Activated naive CD4-positive, alpha-beta T cell treated with anti-CD3 and anti-CD28 coated beads for 36 hours (primary cell): ENCODE measurements at regions of chr18 and their contacts with region 1.

Region 1: DNA sequence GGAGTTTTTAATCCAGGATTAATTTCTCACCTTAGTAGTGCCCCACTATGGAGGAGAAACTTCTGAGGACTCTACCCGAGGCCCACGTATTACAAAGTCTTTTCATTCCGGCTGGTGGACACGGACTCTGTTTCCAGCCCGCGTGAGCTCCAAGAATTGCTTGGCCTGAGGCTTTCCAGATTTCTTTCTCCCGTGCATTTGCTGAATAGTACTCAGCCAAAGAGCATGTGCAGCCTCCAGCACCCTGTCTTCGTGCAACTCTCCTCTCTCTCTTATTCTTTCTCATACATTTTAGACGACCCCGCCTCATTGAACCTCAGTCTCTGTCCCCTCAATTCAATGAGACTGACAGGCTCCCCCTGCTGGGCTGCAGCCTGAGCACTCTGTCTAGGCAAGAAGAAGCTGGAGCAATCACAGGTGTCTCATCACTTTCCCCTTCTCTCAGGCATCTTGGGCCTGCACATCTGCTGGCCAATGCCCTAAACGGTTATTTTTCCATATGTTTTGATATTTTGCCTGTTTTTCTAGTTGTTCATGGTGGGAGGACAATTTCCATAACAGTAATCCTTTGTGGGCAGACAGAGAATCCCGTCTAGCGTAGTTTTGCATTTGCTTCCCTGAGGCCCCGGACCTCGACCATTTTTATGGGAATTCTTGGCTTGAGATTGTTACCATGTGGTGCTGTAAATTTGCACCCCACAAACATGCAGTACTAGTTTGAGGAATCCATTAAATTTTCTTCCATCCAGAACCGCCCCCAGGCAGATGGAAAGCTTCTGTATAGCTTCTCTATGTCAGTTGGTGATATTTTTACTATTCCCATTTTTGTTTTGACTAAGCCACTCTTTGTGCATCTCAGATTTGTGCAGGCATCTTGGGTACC is 50.1 kb upstream of the LPIN2 start:
- DNase-seq: peak; percentile 89
- H3K4me3 Mint-ChIP-seq: peak overlapping the region; percentile 4
- H3K27ac Mint-ChIP-seq: no peak overlapping the region
- H3K4me1 Mint-ChIP-seq: peaks cover 64% of the 10 kb centered on the region
- H3K27me3 Mint-ChIP-seq: no peaks in the 10 kb centered on the region

Region 2: DNA sequence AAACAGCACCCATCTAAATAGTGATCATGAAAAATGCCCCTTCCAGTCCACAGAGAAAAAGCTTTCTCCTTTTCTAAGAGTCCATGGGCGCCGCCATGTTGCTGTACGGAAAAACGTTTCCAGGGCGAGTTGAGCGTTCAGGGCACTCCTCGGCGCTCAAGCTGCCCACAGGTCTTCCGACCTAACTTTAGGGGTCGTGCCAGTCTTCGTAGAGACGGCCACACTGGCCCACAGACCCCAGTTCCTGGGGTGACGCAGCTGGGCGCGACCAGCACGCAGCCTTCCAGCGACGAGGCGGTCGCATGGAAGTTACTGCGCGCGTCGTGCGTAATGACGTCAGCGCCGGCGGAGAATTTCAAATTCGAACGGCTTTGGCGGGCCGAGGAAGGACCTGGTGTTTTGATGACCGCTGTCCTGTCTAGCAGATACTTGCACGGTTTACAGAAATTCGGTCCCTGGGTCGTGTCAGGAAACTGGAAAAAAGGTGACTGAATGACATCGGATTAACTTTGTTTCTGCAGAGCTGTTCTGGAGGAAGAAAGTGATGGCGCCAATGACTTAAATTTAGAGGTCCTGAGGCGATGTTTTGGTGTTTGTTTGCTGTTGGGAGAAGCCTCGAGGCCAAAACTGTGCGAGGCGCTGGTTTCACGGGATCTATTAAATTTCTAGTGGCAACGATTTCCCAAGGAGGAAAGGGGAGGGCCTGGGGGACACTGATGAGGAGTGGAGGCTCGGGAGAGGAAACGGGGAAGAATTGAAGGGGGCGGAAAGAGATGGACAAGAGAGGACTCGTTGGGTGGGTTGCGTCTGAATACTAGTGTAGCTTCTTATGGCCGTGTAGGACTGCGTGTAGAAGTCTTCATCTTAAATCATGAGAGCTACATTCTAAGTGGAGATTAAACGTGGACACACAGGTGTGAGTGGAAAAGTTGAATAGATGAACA is 491.6 kb before region 1 on chr18 and contains the starts of genes METTL4 and NDC80:
- CTCF ChIA-PET with region 1: no interaction called
- intact Hi-C with region 1: loop called (anchors 2 kb)
- DNase-seq: peak; percentile 90
- H3K4me3 Mint-ChIP-seq: peak within 1 kb of the TSS; percentile 97
- H3K27ac Mint-ChIP-seq: peak within 1 kb of the TSS; percentile 98
- H3K4me1 Mint-ChIP-seq: peaks cover 49% of the 10 kb centered on the region
- H3K27me3 Mint-ChIP-seq: no peaks in the 10 kb centered on the region
- total RNA-seq, gene METTL4: 19.4 to 20.6 TPM
- total RNA-seq, gene NDC80: 96.8 to 108 TPM

Region 3: DNA sequence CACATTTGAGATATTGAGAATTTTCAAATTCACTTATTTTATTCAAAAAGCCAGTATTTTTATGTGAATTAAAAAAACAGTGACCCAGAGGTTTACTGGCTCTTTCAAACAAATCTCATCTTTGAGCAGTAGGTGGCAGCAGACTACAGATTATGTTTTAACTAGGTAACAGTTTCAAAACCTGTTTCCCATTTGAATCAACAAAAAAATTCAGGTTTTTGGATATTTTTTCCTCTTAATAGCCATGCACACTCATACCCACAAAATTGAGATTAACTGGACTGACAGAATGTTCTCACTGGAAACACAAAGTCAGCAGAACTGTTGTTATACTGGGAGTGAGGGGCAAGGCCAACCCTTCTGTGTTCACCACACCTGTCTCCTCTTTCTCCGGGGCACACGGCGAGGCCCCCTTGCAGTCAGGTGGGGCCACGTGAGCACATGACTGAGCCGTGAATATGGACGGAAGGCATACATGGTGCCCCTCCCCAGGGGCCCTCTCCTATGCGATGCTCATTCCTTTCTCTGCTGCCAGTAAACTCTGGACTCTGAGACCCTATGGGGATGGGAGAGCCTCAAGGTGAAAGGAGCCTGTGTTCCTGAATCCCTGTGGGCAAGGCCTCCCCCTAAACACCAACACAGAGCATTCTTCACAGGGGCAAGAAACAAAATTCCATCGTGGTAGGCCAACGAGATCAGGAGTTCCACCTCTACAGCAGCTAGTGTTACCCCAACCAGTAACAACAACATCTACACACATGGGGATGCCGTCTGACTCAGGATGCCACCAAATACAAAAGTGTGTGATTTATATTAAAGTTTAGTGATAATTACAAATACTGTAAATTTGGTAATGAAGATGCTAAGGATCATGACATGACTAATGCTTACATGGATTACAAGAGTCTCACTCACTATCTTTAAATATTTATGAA is 130.5 kb before region 1 on chr18:
- CTCF ChIA-PET with region 1: interaction called, 14 read pairs
- intact Hi-C with region 1: loop called (anchors 1 kb)
- DNase-seq: peak; percentile 68
- H3K4me3 Mint-ChIP-seq: no peak overlapping the region
- H3K27ac Mint-ChIP-seq: peak overlapping the region; percentile 94
- H3K4me1 Mint-ChIP-seq: peaks cover 35% of the 10 kb centered on the region
- H3K27me3 Mint-ChIP-seq: no peaks in the 10 kb centered on the region

Region 4: GRCh38 chr18:2994603-2995432 is 68.2 kb before region 1 on chr18:
- CTCF ChIA-PET with region 1: interaction called, 133 read pairs
- intact Hi-C with region 1: loop called (anchors 1 kb)
- DNase-seq: peak; percentile 85
- H3K4me3 Mint-ChIP-seq: no peak overlapping the region
- H3K27ac Mint-ChIP-seq: peak overlapping the region; percentile 78
- H3K4me1 Mint-ChIP-seq: peaks cover 91% of the 10 kb centered on the region
- H3K27me3 Mint-ChIP-seq: no peaks in the 10 kb centered on the region

Region 5: DNA sequence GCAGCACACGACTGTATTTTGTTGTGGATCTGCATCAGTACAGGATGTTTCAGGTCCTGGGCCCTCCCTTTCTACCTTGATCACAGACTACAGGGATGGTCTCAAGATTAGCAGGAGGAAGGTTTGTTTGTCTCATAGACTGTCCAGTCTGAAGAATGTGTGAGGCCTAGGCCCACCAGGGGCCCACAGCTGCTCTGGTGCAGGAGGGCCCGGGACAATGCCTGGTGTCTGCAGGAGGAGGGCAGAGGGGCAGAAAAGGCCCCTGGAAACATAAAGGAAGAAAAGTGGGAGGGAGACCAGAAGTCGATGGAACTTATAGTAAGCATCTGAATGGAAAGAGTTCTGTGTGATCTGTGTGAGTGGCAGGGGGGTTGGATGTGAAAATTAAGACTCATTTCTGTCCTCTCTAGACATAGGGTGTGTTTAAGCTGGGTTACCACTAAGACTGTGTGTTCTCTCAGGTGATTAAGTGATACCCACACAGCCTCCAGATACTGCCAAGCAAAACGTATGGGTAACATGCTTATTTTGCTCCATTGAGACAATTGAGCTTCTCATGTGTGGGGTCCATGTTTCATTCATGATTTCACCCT is 16.7 kb before region 1 on chr18:
- CTCF ChIA-PET with region 1: interaction called, 22 read pairs
- intact Hi-C with region 1: loop called (anchors 1 kb)
- DNase-seq: peak; percentile 55
- H3K4me3 Mint-ChIP-seq: no peak overlapping the region
- H3K27ac Mint-ChIP-seq: peak overlapping the region; percentile 52
- H3K4me1 Mint-ChIP-seq: peaks cover 29% of the 10 kb centered on the region
- H3K27me3 Mint-ChIP-seq: no peaks in the 10 kb centered on the region

Region 6: DNA sequence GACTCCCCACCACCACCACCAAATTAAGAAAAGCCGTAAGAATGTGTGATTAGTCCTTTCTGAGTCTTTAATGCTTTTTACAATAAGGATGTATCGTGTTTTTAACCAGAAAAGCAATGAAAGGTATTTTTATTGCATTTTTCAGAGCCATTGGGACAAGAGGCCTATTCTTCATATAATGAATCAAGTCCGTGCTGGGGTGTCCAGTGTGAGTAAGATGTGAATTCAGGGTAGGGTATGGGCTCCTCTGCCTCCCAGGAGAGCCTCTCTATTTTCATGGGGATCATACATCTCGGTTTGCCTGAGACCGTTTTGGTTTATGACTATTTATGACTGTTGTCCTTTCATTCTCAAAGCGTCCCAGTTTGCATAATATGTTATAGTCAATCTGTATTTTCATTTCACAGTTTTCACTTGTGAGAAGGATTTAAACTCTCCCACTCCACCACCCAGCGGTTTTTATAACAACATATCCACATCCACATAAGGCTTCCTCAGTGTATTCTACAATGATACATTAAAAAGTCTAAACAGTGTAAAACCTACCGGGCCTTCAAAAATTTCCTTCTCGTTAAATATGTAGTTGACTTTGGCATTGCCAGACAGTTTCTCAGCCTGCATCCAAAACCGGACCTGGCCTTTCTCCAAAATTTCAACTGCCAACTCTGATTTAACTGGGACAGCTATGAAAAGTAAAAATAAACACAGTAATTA is 30.7 kb after region 1 on chr18:
- CTCF ChIA-PET with region 1: interaction called, 15 read pairs
- intact Hi-C with region 1: no loop called
- DNase-seq: no peak
- H3K4me3 Mint-ChIP-seq: no peak overlapping the region
- H3K27ac Mint-ChIP-seq: no peak overlapping the region
- H3K4me1 Mint-ChIP-seq: peaks cover 16% of the 10 kb centered on the region
- H3K27me3 Mint-ChIP-seq: no peaks in the 10 kb centered on the region